ENCODE measurements at regions of chr4 and their contacts with region 1.

Region 1: GRCh38 chr4:6909073-6909965 is at the start of gene TBC1D14:
- DNase-seq: peak; percentile 90
- ATAC-seq: peak; percentile 87
- H3K4me3 Mint-ChIP-seq: peak within 1 kb of the TSS; percentile 86
- H3K27ac Mint-ChIP-seq: peak within 1 kb of the TSS; percentile 91
- H3K4me1 Mint-ChIP-seq: peaks cover 64% of the 10 kb centered on the region
- H3K27me3 Mint-ChIP-seq: no peaks in the 10 kb centered on the region
- total RNA-seq, gene TBC1D14: 49.0 to 49.1 TPM

Region 2: DNA sequence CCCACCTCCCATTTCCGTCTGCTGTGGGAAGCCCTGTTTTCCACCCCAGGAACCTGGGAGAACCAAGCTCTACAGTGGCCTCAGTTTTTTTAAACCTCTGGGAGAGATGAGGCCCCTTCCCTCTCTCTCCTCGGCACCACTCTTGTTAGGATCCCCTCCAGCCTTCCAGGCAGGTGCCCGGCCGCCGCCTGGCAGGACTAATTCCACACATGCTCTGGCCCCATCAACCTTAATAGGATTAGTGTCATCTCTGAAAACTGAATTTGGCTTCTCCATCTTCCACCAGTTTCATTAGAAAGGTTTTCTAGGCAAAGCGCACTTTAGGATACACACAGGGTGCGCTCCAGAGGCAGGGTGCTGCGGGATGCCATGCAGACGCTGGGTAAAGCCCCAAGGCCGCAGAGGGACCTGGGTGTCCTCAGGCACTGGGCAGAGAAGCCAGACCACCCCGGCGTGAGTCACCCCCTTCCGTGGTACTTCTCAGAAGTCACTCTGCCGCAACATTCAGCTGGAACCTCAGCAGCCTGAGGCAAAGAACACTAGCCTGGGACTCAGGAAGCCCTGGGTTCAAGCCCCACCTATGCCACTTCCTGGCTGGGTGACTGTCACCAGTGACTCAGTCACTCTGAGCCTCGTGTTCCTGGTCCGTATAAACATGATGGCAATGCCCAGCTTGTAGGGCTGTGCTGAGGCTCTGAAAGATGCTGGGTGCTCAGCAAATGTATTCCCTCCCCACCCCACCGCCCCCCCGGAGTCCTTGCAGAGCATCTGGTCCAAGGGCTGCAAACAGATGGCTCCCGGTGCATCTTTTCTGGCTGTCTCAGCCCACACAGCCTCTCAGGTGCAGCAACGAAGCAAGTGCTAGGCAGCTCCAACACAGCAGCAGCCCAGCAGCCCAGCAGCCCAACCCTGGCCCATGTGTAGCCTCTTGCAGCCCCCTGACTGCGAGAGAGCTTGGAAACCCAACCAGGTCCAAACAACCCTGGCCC is 466.0 kb before region 1 on chr4:
- CTCF ChIA-PET with region 1: no interaction called
- DNase-seq: no peak
- ATAC-seq: no peak
- H3K4me3 Mint-ChIP-seq: no peak overlapping the region
- H3K27ac Mint-ChIP-seq: no peak overlapping the region
- H3K4me1 Mint-ChIP-seq: peaks cover 5% of the 10 kb centered on the region
- H3K27me3 Mint-ChIP-seq: peaks cover 14% of the 10 kb centered on the region

Region 3: GRCh38 chr4:6716018-6716911 is 193.1 kb before region 1 on chr4 and contains the start of gene BLOC1S4:
- CTCF ChIA-PET with region 1: interaction called, 11 read pairs
- DNase-seq: peak; percentile 92
- ATAC-seq: peak; percentile 90
- H3K4me3 Mint-ChIP-seq: peak within 1 kb of the TSS; percentile 88
- H3K27ac Mint-ChIP-seq: peak within 1 kb of the TSS; percentile 93
- H3K4me1 Mint-ChIP-seq: peaks cover 32% of the 10 kb centered on the region
- H3K27me3 Mint-ChIP-seq: no peaks in the 10 kb centered on the region
- total RNA-seq, gene BLOC1S4: 21.8 to 22.3 TPM

Region 4: DNA sequence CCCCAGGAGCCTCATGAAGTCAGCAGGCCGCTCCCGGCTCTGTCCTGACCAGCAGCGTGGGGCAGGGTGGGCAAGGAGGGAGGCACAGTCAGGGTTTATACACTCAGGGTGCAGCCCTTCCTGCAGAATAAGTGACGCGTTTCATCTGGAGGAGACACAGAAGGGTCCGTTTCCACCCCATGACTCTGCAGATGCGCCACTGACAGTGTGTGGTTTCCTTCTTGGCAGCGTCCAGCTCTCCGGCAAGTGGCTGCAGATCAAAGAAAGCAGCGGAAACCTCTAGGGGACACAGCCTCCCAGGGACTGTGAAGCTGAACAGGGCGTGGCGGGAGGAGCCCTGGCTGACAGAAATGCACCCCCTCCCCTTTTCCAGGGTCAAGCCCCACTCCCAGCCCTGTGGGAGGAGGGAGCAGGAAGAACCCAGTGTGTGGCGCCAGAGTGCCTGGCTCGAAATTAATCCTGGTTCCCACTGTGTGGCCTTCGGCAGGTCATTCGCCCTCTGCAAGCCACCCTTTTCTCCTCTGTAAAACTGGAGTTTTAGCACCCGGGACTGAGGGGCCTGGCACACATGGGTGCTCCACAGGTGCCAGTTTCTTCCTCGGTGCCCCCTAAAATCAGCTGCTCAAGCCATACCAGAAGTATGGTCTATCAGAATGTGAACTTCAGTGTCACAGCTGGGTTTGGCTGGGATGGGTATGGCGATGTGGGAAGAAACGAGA is 17.0 kb before region 1 on chr4:
- CTCF ChIA-PET with region 1: interaction called, 10 read pairs
- DNase-seq: peak; percentile 79
- ATAC-seq: peak; percentile 82
- H3K4me3 Mint-ChIP-seq: peak overlapping the region; percentile 53
- H3K27ac Mint-ChIP-seq: peak overlapping the region; percentile 96
- H3K4me1 Mint-ChIP-seq: peaks cover 52% of the 10 kb centered on the region
- H3K27me3 Mint-ChIP-seq: no peaks in the 10 kb centered on the region

Region 5: GRCh38 chr4:6898763-6899162 is 10.6 kb before region 1 on chr4:
- CTCF ChIA-PET with region 1: interaction called, 18 read pairs
- DNase-seq: peak; percentile 64
- ATAC-seq: peak; percentile 16
- H3K4me3 Mint-ChIP-seq: peak overlapping the region; percentile 48
- H3K27ac Mint-ChIP-seq: peak overlapping the region; percentile 98
- H3K4me1 Mint-ChIP-seq: peaks cover 69% of the 10 kb centered on the region
- H3K27me3 Mint-ChIP-seq: no peaks in the 10 kb centered on the region